PC-3 (cell line): ENCODE measurements at regions of chr16 and their contacts with region 1.

Region 1: DNA sequence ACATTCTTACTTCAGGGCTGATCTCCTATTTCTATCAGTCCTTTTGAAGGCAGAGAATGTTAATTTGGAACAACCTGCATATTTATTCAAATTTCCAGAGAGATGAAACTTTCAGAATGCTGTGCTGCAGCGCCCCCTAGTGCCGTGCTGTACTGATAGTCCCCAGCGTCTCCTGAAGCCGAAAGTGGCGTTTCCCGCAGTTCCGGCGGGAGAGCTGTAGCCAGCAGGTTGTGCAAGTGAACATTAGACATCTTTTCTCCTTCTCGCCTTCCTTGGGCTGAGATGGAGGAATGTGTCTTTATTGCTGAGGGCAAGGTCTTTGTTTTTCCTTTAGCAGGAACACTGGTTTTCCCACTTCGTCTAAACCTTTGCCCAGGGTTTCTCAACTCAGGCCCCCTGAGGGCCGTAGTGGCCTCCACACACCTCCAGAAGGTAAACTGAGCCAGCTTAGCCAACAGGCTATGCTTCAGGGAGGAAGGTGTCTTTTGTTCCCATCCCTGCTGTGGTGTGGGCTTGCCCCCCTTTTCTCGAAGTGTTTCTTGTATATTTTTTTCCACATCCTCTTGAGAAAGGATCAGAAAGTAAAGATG is 26.4 kb downstream of the USP10 start:
- DNase-seq: peak; percentile 81
- ATAC-seq: peak; percentile 66
- H3K4me3 ChIP-seq: peak overlapping the region; percentile 21; the same call in 1 of the 2 replicates
- H3K27ac ChIP-seq: no peak overlapping the region
- H3K4me1 ChIP-seq: peaks cover 36% of the 10 kb centered on the region
- H3K27me3 ChIP-seq: no peaks in the 10 kb centered on the region
- CTCF ChIP-seq: peak; percentile 95

Region 2: GRCh38 chr16:84511180-84511824 is 214.9 kb before region 1 on chr16:
- CTCF ChIA-PET with region 1: interaction called, 3 read pairs
- POLR2A ChIA-PET with region 1: no interaction called
- intact Hi-C with region 1: loop called (anchors 1 kb)
- DNase-seq: peak; percentile 87
- ATAC-seq: peak; percentile 89
- H3K4me3 ChIP-seq: peak overlapping the region; percentile 41; the same call in 1 of the 2 replicates
- H3K27ac ChIP-seq: no peak overlapping the region
- H3K4me1 ChIP-seq: peaks cover 5% of the 10 kb centered on the region
- H3K27me3 ChIP-seq: no peaks in the 10 kb centered on the region
- CTCF ChIP-seq: peak; percentile 91

Region 3: GRCh38 chr16:84672276-84673202 is 53.6 kb before region 1 on chr16:
- CTCF ChIA-PET with region 1: interaction called, 5 read pairs
- POLR2A ChIA-PET with region 1: no interaction called
- intact Hi-C with region 1: loop called (anchors 1 kb)
- DNase-seq: peak; percentile 71
- ATAC-seq: peak; percentile 87
- H3K4me3 ChIP-seq: no peak overlapping the region
- H3K27ac ChIP-seq: no peak overlapping the region
- H3K4me1 ChIP-seq: 0 out of 2 replicates have a peak, but pooled peaks cover 5% of the 10 kb centered on the region
- H3K27me3 ChIP-seq: no peaks in the 10 kb centered on the region
- CTCF ChIP-seq: peak; percentile 83

Region 4: DNA sequence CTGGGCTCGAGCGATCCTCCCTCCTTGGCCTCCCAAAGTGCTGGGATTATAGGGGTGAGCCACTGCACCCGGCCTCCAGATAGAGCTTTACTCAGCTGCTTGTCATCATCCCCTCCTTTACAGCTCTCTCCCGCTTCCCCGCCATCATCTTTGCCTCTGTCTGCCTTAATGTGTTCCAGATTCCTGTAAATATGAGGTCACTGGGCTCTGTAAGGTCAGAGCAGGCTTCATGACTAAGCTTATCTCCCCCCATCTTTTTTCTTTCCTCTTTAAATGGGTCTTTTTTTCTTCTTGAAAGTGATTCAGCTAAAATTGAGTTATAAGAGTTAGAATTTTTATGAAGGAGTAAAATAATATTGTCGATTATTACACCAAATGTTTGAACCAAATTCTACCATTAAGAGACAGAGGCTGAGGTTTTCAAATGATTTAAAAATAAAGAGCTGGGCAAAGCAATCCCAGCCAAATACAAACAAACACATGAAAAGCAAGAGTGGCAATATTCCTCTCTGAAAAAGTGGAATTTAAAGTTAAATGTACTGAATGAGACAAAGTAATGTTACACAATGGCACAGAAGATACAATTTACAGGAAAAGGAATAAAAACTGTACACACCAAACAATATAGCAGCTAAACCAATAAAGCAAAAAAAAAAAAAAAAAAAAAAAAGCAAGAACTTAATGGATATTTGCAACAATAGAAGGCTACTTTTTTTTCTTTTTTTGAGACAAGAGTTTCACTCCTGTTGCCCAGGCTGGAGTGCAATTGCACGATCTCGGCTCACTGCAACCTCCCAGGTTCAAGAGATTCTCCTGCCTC is 155.7 kb after region 1 on chr16:
- CTCF ChIA-PET with region 1: no interaction called
- POLR2A ChIA-PET with region 1: no interaction called
- intact Hi-C with region 1: no loop called
- DNase-seq: no peak
- ATAC-seq: no peak
- H3K4me3 ChIP-seq: no peak overlapping the region
- H3K27ac ChIP-seq: no peak overlapping the region
- H3K4me1 ChIP-seq: peaks cover 9% of the 10 kb centered on the region
- H3K27me3 ChIP-seq: no peaks in the 10 kb centered on the region
- CTCF ChIP-seq: no peak